Panc1 (cell line): ENCODE measurements at regions of chr4 and their contacts with region 1.

Region 1: GRCh38 chr4:3563403-3563802 is 31.2 kb upstream of the LRPAP1 start:
- DNase-seq: no peak
- ATAC-seq: no peak
- H3K4me3 ChIP-seq: no peak overlapping the region
- H3K27ac ChIP-seq: no peak overlapping the region
- H3K4me1 ChIP-seq: no peaks in the 10 kb centered on the region
- H3K27me3 ChIP-seq: no peaks in the 10 kb centered on the region
- CTCF ChIP-seq: no peak

Region 2: GRCh38 chr4:3871181-3871871 is 307.9 kb after region 1 on chr4:
- CTCF ChIA-PET with region 1: no interaction called
- POLR2A ChIA-PET with region 1: no interaction called
- in situ Hi-C with region 1: no loop called
- intact Hi-C with region 1: loop called (anchors 10 kb)
- DNase-seq: no peak
- ATAC-seq: 0 out of 2 replicates have a peak, but pooled peaks have one; percentile 15
- H3K4me3 ChIP-seq: no peak overlapping the region
- H3K27ac ChIP-seq: no peak overlapping the region
- H3K4me1 ChIP-seq: 0 out of 2 replicates have a peak, but pooled peaks cover 2% of the 10 kb centered on the region
- H3K27me3 ChIP-seq: no peaks in the 10 kb centered on the region
- CTCF ChIP-seq: no peak